CD4-positive, alpha-beta memory T cell (primary cell): ENCODE measurements at regions of chr11 and their contacts with region 1.

Region 1: GRCh38 chr11:2151500-2152257 is 9.3 kb downstream of the INS start:
- DNase-seq: peak; percentile 76 to 84 (median 78)
- H3K4me3 ChIP-seq: no peak overlapping the region
- H3K4me3 Mint-ChIP-seq: peak overlapping the region; percentile 20 to 67 (median 48)
- H3K27ac ChIP-seq: no peak overlapping the region
- H3K27ac Mint-ChIP-seq: peak overlapping the region in 5 of 7 donors; percentile 22 to 55 (median 26)
- H3K4me1 ChIP-seq: peaks cover 6% of the 10 kb centered on the region
- H3K4me1 Mint-ChIP-seq: peaks cover 5 to 11% (median 7%) of the 10 kb centered on the region in 4 donors
- H3K27me3 ChIP-seq: peaks cover 11% of the 10 kb centered on the region
- H3K27me3 Mint-ChIP-seq: peaks cover 10 to 31% of the 10 kb centered on the region in 2 donors

Region 2: DNA sequence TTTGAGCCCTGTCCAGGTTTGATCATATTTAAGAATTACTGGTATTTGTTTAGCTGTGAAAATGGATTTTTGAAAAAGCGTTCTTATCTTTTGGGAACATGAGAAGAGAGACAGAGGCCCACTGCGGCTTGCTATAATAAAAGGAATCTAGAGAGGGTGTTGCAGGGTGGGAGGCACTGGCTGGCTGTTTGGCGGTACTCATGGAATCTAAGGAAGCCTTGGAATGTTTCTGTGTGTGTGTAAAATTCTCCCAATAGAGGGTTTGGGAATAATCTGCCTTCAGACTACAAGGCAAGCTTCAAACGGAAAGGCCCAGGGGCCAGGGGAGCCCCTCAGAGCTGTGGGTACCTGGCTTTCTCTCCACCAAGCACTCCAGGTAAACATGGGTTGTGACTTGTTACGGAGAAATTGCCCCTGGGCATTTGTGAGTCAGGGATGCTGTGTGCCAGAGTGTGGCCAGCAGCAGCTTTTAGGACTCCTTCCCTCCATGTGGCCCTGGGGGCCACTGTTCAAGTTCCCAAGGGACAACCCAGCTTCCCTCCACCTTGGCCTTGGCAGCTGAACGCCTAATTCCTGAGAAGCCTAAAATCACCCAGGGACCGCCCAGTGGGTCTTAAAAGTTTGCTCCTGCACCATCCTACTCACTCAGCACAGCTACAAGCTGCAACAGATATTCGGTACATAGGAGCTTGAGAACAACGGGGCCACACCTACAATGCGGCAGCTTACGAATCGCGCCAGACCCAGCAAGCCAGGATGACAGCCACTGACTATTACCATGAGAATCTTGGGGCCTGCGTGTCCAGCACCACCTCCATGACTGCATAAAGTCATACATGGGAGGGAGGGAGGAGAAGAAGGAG is 331.0 kb before region 1 on chr11:
- CTCF ChIA-PET with region 1: no interaction called
- POLR2A ChIA-PET with region 1: no interaction called
- intact Hi-C with region 1: no loop called
- DNase-seq: no peak
- H3K4me3 ChIP-seq: no peak overlapping the region
- H3K4me3 Mint-ChIP-seq: no peak overlapping the region
- H3K27ac ChIP-seq: no peak overlapping the region
- H3K27ac Mint-ChIP-seq: no peak overlapping the region
- H3K4me1 ChIP-seq: no peaks in the 10 kb centered on the region
- H3K4me1 Mint-ChIP-seq: no peaks in the 10 kb centered on the region
- H3K27me3 ChIP-seq: no peaks in the 10 kb centered on the region
- H3K27me3 Mint-ChIP-seq: peaks cover 2 to 4% of the 10 kb centered on the region in 2 donors

Region 3: DNA sequence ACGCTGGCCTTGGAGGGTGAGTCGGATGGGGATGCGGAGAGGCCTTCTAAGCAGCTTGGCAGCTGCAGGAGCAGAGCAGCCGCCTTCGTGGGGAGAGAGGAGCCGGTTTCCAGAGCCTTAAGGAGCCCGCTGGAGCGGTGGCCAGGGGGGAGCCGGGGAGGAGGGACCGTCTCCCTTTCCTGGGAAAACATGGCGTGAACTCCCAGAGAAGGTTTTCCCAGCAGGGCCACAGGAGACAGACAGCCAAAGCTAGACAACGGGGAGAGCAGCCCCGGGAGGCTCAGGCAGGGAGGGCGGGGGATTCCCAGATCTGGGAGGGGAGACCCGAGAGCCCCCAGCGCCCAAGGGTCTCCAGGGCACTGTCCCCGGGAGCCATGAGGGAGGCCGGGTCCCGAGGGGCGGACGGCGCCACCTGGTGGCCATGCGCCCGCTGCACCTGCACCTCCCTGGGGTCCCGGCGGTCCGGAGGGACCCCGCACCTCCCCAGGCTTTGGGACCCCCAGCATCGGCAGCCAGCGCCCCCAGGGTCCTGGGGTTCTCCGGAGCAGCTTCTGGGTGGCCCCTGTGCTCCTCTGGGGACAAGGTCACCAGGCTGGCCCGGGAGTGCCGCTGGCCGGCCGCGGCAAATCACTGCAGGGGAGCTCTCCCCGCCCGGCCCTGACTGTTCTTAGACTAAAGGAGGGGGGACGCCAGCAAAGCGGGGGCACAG is 319.3 kb before region 1 on chr11:
- CTCF ChIA-PET with region 1: interaction called, 19 read pairs
- POLR2A ChIA-PET with region 1: no interaction called
- intact Hi-C with region 1: no loop called
- DNase-seq: peak; percentile 33 to 71 (median 57)
- H3K4me3 ChIP-seq: no peak overlapping the region
- H3K4me3 Mint-ChIP-seq: no peak overlapping the region
- H3K27ac ChIP-seq: no peak overlapping the region
- H3K27ac Mint-ChIP-seq: peak overlapping the region in 1 of 7 donors; percentile 53
- H3K4me1 ChIP-seq: peaks cover 5% of the 10 kb centered on the region
- H3K4me1 Mint-ChIP-seq: no peaks in the 10 kb centered on the region
- H3K27me3 ChIP-seq: no peaks in the 10 kb centered on the region
- H3K27me3 Mint-ChIP-seq: peaks cover 7 to 14% of the 10 kb centered on the region in 2 donors

Region 4: DNA sequence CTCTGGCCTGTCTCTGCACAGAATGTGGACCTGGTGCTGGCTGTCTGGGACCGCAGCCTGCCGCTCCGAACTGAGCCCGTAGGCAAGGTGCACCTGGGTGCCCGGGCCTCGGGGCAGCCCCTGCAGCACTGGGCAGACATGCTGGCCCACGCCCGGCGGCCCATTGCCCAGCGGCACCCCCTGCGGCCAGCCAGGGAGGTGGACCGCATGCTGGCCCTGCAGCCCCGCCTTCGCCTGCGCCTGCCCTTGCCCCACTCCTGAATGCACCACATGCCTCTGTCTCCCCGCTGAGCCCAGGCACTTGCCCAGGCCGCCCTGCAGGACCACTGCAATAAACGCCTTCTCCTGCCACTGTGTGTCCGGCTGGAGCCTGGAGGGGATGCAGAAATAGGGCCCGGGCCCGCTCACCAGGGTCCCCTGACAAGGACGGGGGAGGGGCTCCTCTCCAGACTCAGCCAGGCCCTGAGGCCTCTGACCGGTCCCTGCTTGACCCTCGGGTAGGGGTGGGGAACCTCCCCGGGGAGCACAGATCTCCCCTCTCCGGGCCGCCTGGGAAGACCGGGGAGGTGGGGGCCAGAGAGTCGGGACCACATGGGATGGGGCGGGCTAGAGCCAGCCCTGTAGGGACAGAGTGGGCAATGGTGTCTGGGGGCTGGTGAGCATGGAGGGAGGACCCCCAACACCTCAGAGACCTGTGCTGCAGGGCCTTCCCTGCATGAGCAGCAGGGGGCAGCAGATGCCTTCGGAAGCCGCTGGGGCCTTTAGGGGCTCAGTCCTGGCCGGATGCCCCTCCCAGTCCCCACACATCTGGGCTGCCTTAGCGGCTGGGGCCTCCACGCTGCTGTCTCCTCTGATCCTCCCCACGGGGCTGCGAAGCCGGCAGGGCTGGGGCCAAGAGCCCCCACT is 314.3 kb before region 1 on chr11:
- CTCF ChIA-PET with region 1: interaction called, 19 read pairs
- POLR2A ChIA-PET with region 1: no interaction called
- intact Hi-C with region 1: no loop called
- DNase-seq: peak; percentile 63 to 79 (median 75)
- H3K4me3 ChIP-seq: no peak overlapping the region
- H3K4me3 Mint-ChIP-seq: no peak overlapping the region
- H3K27ac ChIP-seq: no peak overlapping the region
- H3K27ac Mint-ChIP-seq: peak overlapping the region in 1 of 7 donors; percentile 30
- H3K4me1 ChIP-seq: peaks cover 20% of the 10 kb centered on the region
- H3K4me1 Mint-ChIP-seq: peaks cover 5 to 10% (median 6%) of the 10 kb centered on the region in 4 donors
- H3K27me3 ChIP-seq: no peaks in the 10 kb centered on the region
- H3K27me3 Mint-ChIP-seq: no peaks in the 10 kb centered on the region

Region 5: DNA sequence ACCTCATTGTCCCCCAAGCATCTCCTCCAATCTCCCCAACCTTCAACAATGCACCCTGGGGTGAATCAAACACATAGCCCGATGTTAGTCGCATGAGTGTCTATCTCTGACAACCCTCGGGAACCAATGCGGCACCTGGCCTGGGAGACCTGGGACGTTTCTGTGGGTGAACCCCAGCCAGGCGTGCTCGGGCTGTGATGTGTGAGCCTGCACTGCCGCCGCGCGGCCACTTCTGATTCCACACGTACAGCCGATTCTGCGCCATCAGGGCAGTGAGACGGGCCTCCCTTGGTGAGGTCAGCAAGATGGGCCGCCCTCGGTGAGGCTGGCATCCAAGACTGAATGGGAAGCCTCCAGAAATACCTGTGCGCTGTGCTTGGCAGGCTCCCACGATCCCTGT is 148.9 kb before region 1 on chr11:
- CTCF ChIA-PET with region 1: interaction called, 10 read pairs
- POLR2A ChIA-PET with region 1: no interaction called
- intact Hi-C with region 1: no loop called
- DNase-seq: no peak
- H3K4me3 ChIP-seq: no peak overlapping the region
- H3K4me3 Mint-ChIP-seq: no peak overlapping the region
- H3K27ac ChIP-seq: no peak overlapping the region
- H3K27ac Mint-ChIP-seq: no peak overlapping the region
- H3K4me1 ChIP-seq: no peaks in the 10 kb centered on the region
- H3K4me1 Mint-ChIP-seq: no peaks in the 10 kb centered on the region
- H3K27me3 ChIP-seq: no peaks in the 10 kb centered on the region
- H3K27me3 Mint-ChIP-seq: no peaks in the 10 kb centered on the region

Region 6: DNA sequence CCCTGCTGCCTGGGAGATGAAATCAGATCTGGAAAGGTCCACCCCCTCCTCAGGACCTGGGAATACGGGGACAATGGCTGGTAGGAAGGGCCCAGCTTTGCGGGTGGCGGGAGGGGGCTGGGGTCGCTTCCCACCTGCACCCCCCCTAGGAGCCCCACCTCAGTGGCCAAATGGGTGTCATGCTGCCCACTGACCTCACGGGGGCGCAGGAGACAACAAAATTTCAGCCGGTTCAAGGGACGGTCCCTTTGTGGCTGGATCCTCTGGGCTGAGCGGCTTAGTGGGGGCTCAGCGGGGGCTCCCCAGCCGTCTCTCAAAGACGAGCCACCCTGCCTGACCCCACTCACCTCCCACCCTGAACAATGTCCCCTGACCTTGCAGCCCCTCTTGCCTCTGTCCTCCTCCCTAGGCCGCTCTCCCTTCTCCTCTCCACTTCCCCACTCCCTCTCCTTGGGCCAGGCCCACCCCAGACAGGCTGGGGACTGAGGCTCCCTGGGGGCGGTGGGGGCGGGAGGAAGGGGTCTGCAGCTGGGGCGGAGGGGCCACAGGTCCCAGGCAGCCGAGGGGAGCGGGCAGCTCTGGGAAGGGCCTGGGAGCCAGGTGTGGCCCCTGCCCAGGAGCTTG is 114.7 kb before region 1 on chr11:
- CTCF ChIA-PET with region 1: interaction called, 276 read pairs
- POLR2A ChIA-PET with region 1: interaction called, 9 read pairs
- intact Hi-C with region 1: no loop called
- DNase-seq: no peak
- H3K4me3 ChIP-seq: no peak overlapping the region
- H3K4me3 Mint-ChIP-seq: no peak overlapping the region
- H3K27ac ChIP-seq: no peak overlapping the region
- H3K27ac Mint-ChIP-seq: no peak overlapping the region
- H3K4me1 ChIP-seq: no peaks in the 10 kb centered on the region
- H3K4me1 Mint-ChIP-seq: no peaks in the 10 kb centered on the region
- H3K27me3 ChIP-seq: no peaks in the 10 kb centered on the region
- H3K27me3 Mint-ChIP-seq: no peaks in the 10 kb centered on the region

Region 7: GRCh38 chr11:2077061-2077802 is 74.4 kb before region 1 on chr11:
- CTCF ChIA-PET with region 1: interaction called, 4 read pairs
- POLR2A ChIA-PET with region 1: no interaction called
- intact Hi-C with region 1: loop called (anchors 2 kb)
- DNase-seq: peak in 3 of 5 donors; percentile 27 to 68 (median 30)
- H3K4me3 ChIP-seq: no peak overlapping the region
- H3K4me3 Mint-ChIP-seq: peak overlapping the region in 2 of 8 donors; percentile 4 to 59
- H3K27ac ChIP-seq: no peak overlapping the region
- H3K27ac Mint-ChIP-seq: peak overlapping the region in 6 of 7 donors; percentile 15 to 78 (median 32)
- H3K4me1 ChIP-seq: peaks cover 11% of the 10 kb centered on the region
- H3K4me1 Mint-ChIP-seq: peaks cover 7 to 17% (median 11%) of the 10 kb centered on the region in 4 donors
- H3K27me3 ChIP-seq: no peaks in the 10 kb centered on the region
- H3K27me3 Mint-ChIP-seq: peaks cover 3 to 18% of the 10 kb centered on the region in 2 donors

Region 8: GRCh38 chr11:2173150-2173693 is 21.5 kb after region 1 on chr11:
- CTCF ChIA-PET with region 1: no interaction called
- POLR2A ChIA-PET with region 1: no interaction called
- intact Hi-C with region 1: no loop called
- DNase-seq: no peak
- H3K4me3 ChIP-seq: no peak overlapping the region
- H3K4me3 Mint-ChIP-seq: no peak overlapping the region
- H3K27ac ChIP-seq: no peak overlapping the region
- H3K27ac Mint-ChIP-seq: no peak overlapping the region
- H3K4me1 ChIP-seq: no peaks in the 10 kb centered on the region
- H3K4me1 Mint-ChIP-seq: no peaks in the 10 kb centered on the region
- H3K27me3 ChIP-seq: no peaks in the 10 kb centered on the region
- H3K27me3 Mint-ChIP-seq: no peaks in the 10 kb centered on the region

Region 9: GRCh38 chr11:2191883-2192282 is 40.2 kb after region 1 on chr11:
- CTCF ChIA-PET with region 1: no interaction called
- POLR2A ChIA-PET with region 1: no interaction called
- intact Hi-C with region 1: no loop called
- DNase-seq: no peak
- H3K4me3 ChIP-seq: no peak overlapping the region
- H3K4me3 Mint-ChIP-seq: no peak overlapping the region
- H3K27ac ChIP-seq: no peak overlapping the region
- H3K27ac Mint-ChIP-seq: no peak overlapping the region
- H3K4me1 ChIP-seq: no peaks in the 10 kb centered on the region
- H3K4me1 Mint-ChIP-seq: peaks cover 0 to 11% (median 7%) of the 10 kb centered on the region in 4 donors
- H3K27me3 ChIP-seq: no peaks in the 10 kb centered on the region
- H3K27me3 Mint-ChIP-seq: peaks cover under 1 to 17% of the 10 kb centered on the region in 2 donors

Region 10: DNA sequence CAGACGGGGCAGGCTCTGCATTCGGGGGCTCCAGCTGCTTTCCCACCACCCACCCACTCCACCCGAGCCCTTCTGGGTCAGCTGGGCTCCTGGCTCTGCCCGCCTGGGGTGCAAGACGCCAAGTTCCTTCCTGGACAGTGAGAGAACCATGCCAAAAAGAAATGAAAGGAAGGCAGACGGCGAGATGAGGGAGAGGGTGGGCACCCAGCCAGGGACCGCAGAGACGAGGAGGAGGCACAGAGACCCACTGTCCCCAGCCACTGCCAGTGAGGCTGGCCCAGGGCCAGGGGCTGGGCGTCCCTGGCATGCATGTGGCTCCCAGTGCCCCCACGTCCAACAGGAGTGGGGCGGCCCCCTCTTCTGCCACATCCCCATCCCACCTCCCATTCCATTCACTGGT is 214.6 kb after region 1 on chr11:
- CTCF ChIA-PET with region 1: no interaction called
- POLR2A ChIA-PET with region 1: no interaction called
- intact Hi-C with region 1: no loop called
- DNase-seq: no peak
- H3K4me3 ChIP-seq: no peak overlapping the region
- H3K4me3 Mint-ChIP-seq: no peak overlapping the region
- H3K27ac ChIP-seq: no peak overlapping the region
- H3K27ac Mint-ChIP-seq: no peak overlapping the region
- H3K4me1 ChIP-seq: no peaks in the 10 kb centered on the region
- H3K4me1 Mint-ChIP-seq: no peaks in the 10 kb centered on the region
- H3K27me3 ChIP-seq: no peaks in the 10 kb centered on the region
- H3K27me3 Mint-ChIP-seq: no peaks in the 10 kb centered on the region